Stomach (tissue), 19 donors: ENCODE measurements at regions of chr6 and their contacts with region 1.

Region 1: DNA sequence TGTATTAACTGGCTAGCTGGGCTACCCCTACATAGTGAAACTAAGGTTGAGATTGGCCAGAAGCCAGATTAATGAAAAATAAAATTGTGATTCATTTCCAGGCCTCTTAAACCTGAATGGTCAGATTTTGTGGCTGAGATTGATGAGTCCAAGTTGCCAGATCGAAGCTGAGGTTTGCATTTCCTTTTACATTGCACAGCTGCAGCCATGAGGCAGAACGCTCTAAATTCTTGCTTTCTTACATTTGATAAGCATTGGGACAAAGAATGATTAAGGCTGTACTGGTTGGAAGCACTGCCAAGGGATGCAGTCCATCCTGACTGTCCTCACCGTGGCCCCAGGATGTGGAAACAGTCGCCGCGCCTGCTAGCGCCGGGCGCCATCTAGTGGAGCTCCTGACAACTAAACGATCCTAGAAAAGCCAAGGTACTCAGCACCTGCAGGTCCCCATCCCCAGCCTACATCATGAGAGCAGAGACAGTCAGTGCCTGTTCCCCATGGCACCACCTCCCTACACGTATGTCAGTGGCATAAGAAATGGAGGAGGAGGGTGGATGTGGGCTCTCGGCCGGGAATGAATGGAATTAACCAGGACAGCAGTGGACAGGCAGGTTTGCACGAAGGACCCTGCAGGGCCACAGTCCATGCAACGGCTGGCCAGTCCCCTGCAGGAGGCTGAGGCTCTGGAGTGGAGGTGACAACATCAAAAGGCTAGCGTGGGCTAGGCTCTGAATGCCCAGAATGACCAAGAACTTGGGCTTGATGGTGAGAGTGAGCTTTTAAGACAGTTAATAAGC is 19.0 kb downstream of the PXDC1 start:
- DNase-seq: peak; percentile 79 to 90
- H3K4me3 ChIP-seq: no peak overlapping the region
- H3K27ac ChIP-seq: no peak overlapping the region
- H3K4me1 ChIP-seq: peaks cover 8 to 24% (median 12%) of the 10 kb centered on the region in 4 donors
- H3K27me3 ChIP-seq: no peaks in the 10 kb centered on the region
- CTCF ChIP-seq: peak in 5 of 7 experiments; percentile 64 to 78 (median 75)
- EP300 ChIP-seq: no peak
- POLR2A ChIP-seq: no peak

Region 2: DNA sequence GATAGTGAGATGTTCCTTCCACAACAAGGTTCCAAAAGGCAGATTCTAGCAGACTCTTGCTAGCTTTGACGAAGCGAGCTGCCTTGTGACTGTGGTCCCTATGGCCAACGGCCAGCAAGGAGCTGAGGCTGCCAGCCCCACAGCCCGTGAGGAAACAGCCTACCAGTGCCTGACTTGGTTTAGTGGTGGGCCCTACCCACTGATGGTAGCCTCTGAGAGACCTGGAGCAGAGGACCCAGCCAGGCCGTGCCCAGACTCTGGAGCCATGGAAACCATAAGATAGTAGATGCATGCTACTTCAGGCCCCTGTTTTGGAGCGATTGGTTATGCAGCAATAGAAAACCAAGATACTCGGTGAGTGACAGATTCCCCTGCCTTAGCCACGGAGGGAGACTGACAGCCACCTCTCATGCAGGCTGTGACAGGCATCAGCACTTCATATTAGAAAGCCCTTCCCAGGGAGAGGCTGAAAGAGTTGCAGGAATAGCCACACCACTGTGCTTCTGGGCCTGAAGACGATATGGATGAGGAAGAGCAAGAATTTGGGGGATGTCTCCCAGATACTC is 454.6 kb before region 1 on chr6:
- intact Hi-C with region 1: loop called (anchors 5 kb)
- DNase-seq: no peak
- H3K4me3 ChIP-seq: no peak overlapping the region
- H3K27ac ChIP-seq: no peak overlapping the region
- H3K4me1 ChIP-seq: peaks cover 0 to 30% (median 11%) of the 10 kb centered on the region in 4 donors
- H3K27me3 ChIP-seq: no peaks in the 10 kb centered on the region
- CTCF ChIP-seq: no peak
- EP300 ChIP-seq: no peak
- POLR2A ChIP-seq: no peak

Region 3: DNA sequence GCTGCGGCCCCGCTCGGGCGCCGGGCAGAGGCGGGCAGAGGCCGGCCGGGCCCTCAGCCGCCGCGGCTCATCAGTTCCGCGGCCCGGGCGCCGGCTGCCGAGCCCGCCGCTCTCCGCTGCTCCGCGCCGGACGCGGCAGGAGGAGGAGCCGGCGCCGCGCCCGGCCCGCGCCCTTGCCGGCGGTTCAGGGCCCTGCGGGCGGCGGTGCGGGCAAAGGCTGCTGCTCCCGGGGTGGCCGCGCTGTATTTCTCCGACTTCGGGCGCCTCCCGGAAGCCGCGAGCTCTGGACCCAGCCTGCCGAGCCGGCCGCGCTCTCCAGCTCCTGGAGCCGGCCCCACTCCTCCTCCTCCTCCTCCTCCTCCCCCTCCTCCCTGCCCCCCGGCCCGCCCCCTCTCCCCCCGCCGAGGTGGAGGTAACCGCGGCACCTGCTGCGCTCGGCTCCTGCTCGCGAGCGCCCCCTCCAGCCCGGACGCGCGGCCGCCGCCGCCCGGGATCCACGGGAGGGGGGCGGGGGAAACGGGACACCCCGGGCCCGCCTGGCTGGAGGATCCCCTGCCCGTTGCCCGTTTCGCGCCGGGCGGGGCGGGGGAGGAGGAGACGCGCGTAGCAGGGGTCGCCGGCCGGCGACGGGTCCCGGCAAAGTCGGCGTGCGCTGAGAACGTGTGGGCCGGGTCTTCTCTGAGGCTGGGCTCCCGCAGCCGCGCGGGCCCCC is 275.6 kb before region 1 on chr6 and contains the start of gene SLC22A23:
- intact Hi-C with region 1: loop called (anchors 10 kb)
- DNase-seq: peak; percentile 84 to 92
- H3K4me3 ChIP-seq: peak within 1 kb of the TSS; percentile 66 to 87 (median 72)
- H3K27ac ChIP-seq: peak within 1 kb of the TSS; percentile 68 to 85 (median 83)
- H3K4me1 ChIP-seq: peaks cover 8 to 49% (median 40%) of the 10 kb centered on the region in 4 donors
- H3K27me3 ChIP-seq: peaks cover 0 to 32% (median 21%) of the 10 kb centered on the region in 3 donors
- CTCF ChIP-seq: peak in 4 of 7 experiments; percentile 48 to 89 (median 86)
- EP300 ChIP-seq: no peak
- POLR2A ChIP-seq: no peak
- total RNA-seq, gene SLC22A23: 18.1 to 241 (median 45.5) TPM

Region 4: GRCh38 chr6:3913077-3913957 is 180.8 kb after region 1 on chr6:
- intact Hi-C with region 1: no loop called
- DNase-seq: peak; percentile 77 to 86
- H3K4me3 ChIP-seq: no peak overlapping the region
- H3K27ac ChIP-seq: peak overlapping the region; percentile 84 to 92 (median 89)
- H3K4me1 ChIP-seq: peaks cover 14 to 56% (median 41%) of the 10 kb centered on the region in 4 donors
- H3K27me3 ChIP-seq: no peaks in the 10 kb centered on the region
- CTCF ChIP-seq: no peak
- EP300 ChIP-seq: peak; percentile 18
- POLR2A ChIP-seq: no peak